Common myeloid progenitor, CD34-positive (primary cell): ENCODE measurements at regions of chr2 and their contacts with region 1.

Region 1: DNA sequence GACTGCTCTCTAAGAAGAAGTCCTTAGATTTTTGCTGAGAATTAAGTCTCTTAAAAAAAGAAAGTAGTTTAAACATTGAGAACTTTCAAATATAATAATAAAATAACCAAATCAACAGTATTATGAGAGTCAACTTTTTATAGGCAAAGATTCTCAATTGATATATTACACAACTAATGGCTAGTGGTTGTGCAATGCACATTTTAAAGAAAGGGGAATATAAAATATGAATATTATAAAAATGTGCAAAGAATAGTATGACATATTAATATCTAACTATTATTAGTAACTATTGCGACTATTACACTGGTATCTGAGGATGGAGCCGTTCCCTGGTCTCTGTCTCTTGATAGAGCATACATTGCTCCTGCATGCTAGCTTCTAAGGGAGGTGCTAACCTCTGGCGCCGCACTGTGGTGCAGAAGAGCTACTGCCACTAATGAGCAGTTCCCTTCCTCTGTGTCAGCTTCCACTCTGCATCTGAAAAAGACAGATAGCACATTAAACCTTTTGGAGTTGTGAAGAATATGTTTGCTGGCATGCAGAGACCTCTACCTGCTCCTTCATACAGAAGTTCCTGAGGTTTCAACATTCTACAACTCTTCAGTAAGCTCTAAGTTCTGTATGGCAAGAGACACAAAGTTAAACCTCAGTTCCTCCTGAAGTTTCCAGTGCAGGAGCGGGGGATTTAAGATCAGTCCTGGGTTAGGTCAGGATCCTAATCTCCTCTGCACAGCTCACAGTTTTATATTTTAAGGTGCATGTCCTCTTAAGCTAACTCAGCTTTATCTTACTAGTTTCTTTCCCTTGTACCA is 3.5 kb upstream of the SLC9A2 start:
- DNase-seq: peak; percentile 54 to 81 (median 77)
- H3K4me3 ChIP-seq: no peak overlapping the region
- H3K27ac ChIP-seq: no peak overlapping the region
- H3K4me1 ChIP-seq: peaks cover 0 to 21% (median 18%) of the 10 kb centered on the region in 4 experiments
- H3K27me3 ChIP-seq: peaks cover 16 to 59% (median 29%) of the 10 kb centered on the region in 5 experiments

Region 2: DNA sequence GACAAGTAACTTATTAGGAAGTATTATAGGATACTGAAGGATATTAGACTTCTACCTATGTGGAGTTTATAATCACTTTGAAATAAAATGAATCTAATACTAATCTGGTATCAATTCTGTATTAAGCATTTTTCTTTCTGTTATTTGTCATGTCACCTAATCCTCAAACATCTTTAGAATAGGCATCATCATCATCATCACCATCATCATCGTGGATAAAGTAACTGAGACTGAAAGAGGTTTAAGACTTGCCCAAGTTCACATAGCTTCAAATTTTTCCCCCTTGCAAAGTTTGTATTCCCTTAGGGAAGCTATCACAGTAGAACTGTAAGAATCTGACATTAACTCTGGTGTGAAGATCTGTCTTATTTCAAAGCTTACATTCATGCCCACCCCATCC is 148.3 kb before region 1 on chr2:
- CTCF ChIA-PET with region 1: interaction called, 111 read pairs
- POLR2A ChIA-PET with region 1: no interaction called
- DNase-seq: no peak
- H3K4me3 ChIP-seq: no peak overlapping the region
- H3K27ac ChIP-seq: no peak overlapping the region
- H3K4me1 ChIP-seq: no peaks in the 10 kb centered on the region
- H3K27me3 ChIP-seq: peaks cover 0 to 5% (median 0%) of the 10 kb centered on the region in 5 experiments

Region 3: GRCh38 chr2:102520801-102521200 is 95.0 kb before region 1 on chr2:
- CTCF ChIA-PET with region 1: interaction called, 12 read pairs
- POLR2A ChIA-PET with region 1: no interaction called
- DNase-seq: no peak
- H3K4me3 ChIP-seq: no peak overlapping the region
- H3K27ac ChIP-seq: no peak overlapping the region
- H3K4me1 ChIP-seq: no peaks in the 10 kb centered on the region
- H3K27me3 ChIP-seq: no peaks in the 10 kb centered on the region

Region 4: GRCh38 chr2:102652126-102652525 is 36.3 kb after region 1 on chr2:
- CTCF ChIA-PET with region 1: no interaction called
- POLR2A ChIA-PET with region 1: no interaction called
- DNase-seq: no peak
- H3K4me3 ChIP-seq: no peak overlapping the region
- H3K27ac ChIP-seq: no peak overlapping the region
- H3K4me1 ChIP-seq: peaks cover 0 to 12% (median 1%) of the 10 kb centered on the region in 4 experiments
- H3K27me3 ChIP-seq: no peaks in the 10 kb centered on the region

Region 5: DNA sequence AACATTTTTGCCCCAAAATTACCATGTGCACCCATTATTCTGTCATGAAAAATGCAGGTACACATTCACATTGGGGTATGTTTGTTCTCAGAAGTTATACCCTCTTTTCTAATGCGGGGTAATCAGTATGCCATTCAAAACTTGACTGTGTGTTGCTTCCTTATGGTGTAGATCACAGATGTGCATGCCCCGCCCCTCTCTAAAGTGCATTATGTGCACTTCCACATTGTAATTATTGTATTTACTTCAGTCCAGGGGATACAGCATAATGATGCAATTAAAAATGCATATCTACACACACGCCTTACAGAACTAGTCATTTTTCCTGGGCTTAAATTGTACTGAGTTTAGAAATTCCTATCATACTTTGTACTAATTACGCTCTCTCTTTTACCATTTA is 52.3 kb after region 1 on chr2:
- CTCF ChIA-PET with region 1: no interaction called
- POLR2A ChIA-PET with region 1: no interaction called
- DNase-seq: no peak
- H3K4me3 ChIP-seq: no peak overlapping the region
- H3K27ac ChIP-seq: no peak overlapping the region
- H3K4me1 ChIP-seq: peaks cover 4 to 19% (median 8%) of the 10 kb centered on the region in 4 experiments
- H3K27me3 ChIP-seq: no peaks in the 10 kb centered on the region

Region 6: GRCh38 chr2:102703748-102704147 is 87.9 kb after region 1 on chr2:
- CTCF ChIA-PET with region 1: interaction called, 17 read pairs
- POLR2A ChIA-PET with region 1: no interaction called
- DNase-seq: peak; percentile 31 to 67 (median 61)
- H3K4me3 ChIP-seq: no peak overlapping the region
- H3K27ac ChIP-seq: no peak overlapping the region
- H3K4me1 ChIP-seq: no peaks in the 10 kb centered on the region
- H3K27me3 ChIP-seq: peaks cover 0 to 11% (median 0%) of the 10 kb centered on the region in 5 experiments